Left cardiac atrium (tissue), 4 donors: ENCODE measurements at regions of chr5 and their contacts with region 1.

Region 1: DNA sequence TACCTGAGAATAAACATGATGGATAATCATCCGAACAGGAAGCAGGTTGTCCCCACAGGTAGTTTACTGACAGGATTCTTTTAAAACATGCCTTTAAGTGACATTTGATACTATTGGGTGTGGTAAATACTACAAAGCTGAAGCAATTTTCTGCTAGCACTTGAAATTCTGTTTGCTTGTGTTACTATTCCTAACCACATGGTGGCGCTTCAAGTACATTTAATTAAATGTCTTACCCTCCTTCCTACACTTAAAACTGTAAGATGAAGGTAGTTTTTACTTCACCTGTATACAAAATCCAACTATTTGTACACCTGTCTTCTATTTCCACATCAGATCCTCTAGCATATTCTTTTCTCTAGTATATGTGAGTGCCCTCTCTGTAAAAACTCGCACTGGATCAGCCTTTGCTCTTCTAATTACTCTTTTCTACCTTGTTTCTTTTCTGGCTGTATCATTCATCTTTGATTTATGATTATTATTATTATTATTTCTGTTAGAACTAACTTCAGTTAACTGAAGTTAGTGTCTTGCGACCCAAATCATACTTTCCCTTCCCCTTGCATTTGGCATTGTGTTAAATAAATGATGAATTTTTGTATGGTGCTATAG is 18.4 kb downstream of the SLC25A46 start:
- DNase-seq: no peak
- ATAC-seq: no peak

Region 2: DNA sequence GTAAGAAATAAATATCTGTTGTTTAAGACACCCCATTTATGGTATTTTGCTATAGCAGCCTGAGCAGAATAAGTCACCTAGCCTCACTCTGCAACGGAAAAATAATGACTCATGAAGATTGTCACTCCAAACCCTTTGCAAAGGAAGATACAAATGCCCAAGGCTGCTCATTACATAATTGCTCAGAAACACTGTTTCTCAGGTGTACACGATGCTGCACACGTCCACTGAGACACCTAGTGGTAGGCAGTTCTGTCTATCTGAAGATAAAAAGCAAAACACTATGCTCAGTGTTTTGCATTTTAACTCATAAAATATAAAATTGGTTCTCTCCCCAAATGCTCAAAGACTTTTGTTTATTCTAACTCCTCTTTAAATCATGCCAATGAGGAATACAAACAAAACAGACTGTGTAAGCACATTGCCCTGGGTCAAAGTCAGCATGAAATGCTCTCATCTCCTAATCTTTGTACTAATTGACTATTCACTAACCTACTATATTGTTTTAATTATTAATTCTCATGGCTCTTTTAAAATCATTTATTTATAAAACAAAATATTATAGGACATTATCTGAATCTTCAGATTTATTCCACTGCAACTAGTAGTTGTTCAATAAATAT is 306.6 kb after region 1 on chr5:
- intact Hi-C with region 1: loop called in 1 of 2 experiments (anchors 10 kb)
- DNase-seq: no peak
- ATAC-seq: no peak

Region 3: DNA sequence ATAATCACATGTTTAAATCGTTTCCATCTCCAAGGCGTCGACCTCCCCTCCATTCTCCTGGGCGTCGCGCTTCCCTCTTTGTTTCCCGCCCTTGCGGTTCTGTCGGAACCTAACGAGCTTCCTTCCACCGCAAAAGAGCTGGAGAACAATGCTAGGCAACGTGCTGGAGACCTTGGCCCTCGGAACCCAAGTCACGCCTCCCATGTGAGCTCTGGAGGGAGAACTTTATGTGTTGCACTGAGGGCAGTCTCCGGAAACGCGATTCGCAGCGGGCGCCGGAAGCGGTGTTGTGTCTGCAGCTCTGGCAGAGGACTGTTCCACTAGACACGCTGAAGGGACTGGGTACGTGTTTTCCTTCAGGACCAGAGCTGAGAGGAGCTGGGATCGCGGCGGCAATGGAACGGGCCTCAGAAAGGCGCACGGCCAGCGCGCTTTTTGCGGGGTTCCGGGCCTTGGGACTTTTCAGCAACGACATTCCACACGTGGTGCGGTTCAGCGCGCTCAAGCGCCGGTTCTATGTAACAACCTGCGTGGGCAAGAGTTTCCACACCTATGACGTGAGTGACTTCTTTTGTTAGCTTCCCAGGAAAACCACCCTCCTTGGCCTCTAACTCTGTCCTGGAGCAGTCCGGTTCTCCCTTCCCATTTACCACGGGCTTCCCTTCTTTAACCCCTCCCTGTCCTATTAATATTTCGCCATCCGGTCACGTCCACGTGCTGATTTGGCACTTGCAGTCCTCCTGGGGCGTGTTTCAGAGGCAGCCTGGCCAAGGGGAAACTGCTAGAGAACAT is 335.0 kb after region 1 on chr5 and contains the start of gene WDR36:
- intact Hi-C with region 1: loop called in 1 of 2 experiments (anchors 5 kb)
- DNase-seq: peak; percentile 92
- ATAC-seq: peak; percentile 98 to 99
- total RNA-seq, gene WDR36: 17.6 to 18.0 TPM